HepG2 (cell line): ENCODE measurements at regions of chr16 and their contacts with region 1.

Region 1: DNA sequence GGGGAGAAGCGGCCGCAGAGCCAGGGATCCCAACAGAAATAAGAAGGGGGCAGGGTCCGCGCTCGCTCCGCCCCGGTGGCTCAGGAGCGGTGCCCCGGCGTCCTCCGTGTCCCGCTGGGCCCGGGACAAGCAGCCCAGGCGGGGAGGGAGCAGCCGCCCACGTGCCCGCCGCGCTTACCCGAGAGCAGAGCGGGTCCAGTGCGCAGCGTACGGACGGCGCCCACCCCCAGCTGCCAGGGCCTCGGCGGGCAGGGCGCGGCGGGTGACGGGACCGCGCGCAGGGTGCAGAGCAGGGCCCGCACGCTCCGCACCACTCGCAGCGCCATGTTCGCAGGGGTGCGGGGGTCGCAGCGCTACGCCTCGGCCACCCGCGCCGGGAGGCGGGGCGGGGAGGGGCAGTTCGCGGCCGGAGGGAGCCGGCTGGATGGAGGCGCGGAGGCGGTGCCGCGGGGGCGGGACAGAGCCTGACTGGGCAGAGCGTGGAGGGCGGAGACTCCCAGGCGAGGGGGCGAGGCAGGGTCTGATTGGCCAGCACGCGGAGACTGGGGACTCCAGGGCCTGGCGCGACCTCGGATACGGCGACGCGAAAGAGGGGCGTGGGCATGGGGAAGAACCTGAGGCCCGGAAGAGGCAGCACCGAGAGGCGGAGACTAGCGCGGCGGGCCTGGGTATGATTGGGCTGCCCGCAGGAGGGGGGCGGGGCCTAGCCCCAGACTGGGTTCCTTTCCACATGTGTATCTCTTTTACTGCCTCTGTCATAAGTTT is at the start of gene GCSH:
- DNase-seq: peak; percentile 98
- ATAC-seq: peak; percentile 98
- H3K4me3 ChIP-seq: peak within 1 kb of the TSS; percentile 75 to 86 (median 83)
- H3K27ac ChIP-seq: peak within 1 kb of the TSS; percentile 88
- H3K4me1 ChIP-seq: peaks cover 52% of the 10 kb centered on the region
- H3K27me3 ChIP-seq: no peaks in the 10 kb centered on the region; a peak in 1 of 5 replicates
- CTCF ChIP-seq: no peak; the same call in 1 of the 2 replicates
- EP300 ChIP-seq: no peak
- POLR2A ChIP-seq: peak; percentile 67 to 82; a peak in 3 of 4 replicates
- RAD21 ChIP-seq: peak; percentile 66
- total RNA-seq, gene GCSH: 103 and 117 TPM in 2 replicates

Region 2: DNA sequence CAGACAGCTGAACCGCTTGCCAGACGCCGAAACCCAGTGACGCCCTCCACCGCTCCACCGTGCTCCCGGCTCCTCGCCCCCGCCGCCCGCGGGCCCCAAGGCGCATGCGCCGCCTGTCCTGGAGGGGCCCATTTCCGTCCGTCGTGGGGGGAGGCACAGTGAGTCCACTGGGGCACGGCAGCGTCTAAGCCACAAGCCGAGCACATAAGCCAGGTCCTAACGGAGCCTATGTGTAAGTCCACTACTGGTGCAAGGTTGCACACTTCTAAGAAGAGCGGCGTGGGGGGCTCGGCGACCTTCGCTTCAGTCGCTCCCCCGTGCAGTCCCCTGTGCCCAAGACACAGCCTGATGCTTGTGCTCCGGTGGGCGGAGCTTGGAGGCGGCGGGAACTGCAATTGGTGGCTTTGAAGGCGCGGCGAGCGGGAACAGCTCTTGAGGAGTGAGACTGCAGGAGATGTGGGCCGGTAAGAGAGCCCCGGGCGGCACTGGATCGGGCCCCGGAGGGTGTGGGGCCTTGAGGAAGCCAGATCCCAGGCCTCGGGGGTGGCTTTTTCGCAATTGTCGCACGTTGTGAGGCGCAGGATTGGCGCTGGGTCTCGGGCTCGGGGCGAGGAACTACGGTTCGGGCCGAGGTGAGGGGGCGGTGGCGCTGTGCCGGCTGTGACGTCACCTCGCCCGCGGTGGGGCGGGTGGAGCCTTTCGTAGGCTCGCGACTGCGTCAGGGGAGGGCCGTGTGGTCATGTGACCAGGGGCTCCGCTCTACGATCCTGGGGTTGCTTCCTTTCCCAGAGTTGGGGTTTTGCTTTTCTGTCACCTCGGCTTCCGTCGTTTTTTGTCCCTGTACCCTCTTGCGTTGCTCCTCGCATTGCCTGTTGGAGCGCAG is 89.1 kb before region 1 on chr16 and contains the starts of genes CENPN and CMC2:
- CTCF ChIA-PET with region 1: no interaction called
- POLR2A ChIA-PET with region 1: no interaction called
- in situ Hi-C with region 1: no loop called
- intact Hi-C with region 1: loop called (anchors 5 kb)
- DNase-seq: peak; percentile 98
- ATAC-seq: peak; percentile 91
- H3K4me3 ChIP-seq: peak within 1 kb of the TSS; percentile 90 to 99 (median 90)
- H3K27ac ChIP-seq: peak within 1 kb of the TSS; percentile 99
- H3K4me1 ChIP-seq: peaks cover 35% of the 10 kb centered on the region
- H3K27me3 ChIP-seq: no peaks in the 10 kb centered on the region; a peak in 1 of 5 replicates
- CTCF ChIP-seq: peak; percentile 47; the same call in 1 of the 2 replicates
- EP300 ChIP-seq: peak in 1 of 2 experiments; percentile 4; a peak in 1 of 4 replicates
- POLR2A ChIP-seq: peak; percentile 76 to 80
- RAD21 ChIP-seq: no peak; the same call in 1 of the 2 replicates
- total RNA-seq, gene CENPN: 129 and 193 TPM in 2 replicates
- total RNA-seq, gene CMC2: 129 and 147 TPM in 2 replicates

Region 3: DNA sequence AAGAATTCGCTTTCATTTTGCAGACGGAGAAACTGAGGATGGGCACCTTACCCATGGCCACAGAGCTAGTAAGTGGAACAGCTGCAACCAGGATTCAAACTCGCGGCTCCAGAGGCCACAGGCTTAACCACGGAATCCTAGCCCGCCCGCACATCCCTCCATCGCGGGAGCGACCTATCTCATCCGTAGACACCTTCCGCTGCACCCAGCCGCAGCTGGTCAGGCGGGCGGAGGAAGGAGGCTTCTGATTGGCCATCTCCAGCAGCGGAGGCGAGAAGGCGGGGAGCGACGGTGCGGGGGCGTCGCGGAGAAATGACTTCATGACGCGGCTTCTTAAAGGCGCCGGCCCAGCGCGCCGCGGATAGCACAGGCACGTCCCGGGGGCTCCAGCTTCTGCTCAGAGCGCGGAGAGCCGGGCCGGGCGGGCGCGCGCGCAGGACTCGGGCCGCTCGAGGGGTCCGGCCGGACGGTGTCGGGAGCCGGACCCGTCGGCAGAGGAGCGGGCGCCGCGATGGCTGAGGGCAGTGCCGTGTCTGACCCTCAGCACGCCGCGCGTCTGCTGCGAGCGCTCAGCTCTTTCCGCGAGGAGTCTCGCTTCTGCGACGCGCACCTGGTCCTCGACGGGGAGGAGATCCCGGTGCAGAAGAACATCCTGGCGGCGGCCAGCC is 218.6 kb after region 1 on chr16 and contains the start of gene GAN:
- CTCF ChIA-PET with region 1: no interaction called
- POLR2A ChIA-PET with region 1: no interaction called
- in situ Hi-C with region 1: no loop called
- intact Hi-C with region 1: loop called (anchors 1 kb)
- DNase-seq: peak; percentile 95
- ATAC-seq: peak; percentile 96
- H3K4me3 ChIP-seq: peak within 1 kb of the TSS; percentile 88 to 95 (median 93)
- H3K27ac ChIP-seq: peak within 1 kb of the TSS; percentile 80
- H3K4me1 ChIP-seq: peaks cover 52% of the 10 kb centered on the region
- H3K27me3 ChIP-seq: no peaks in the 10 kb centered on the region; a peak in 1 of 5 replicates
- CTCF ChIP-seq: no peak
- EP300 ChIP-seq: 0 out of 4 replicates have a peak, but pooled peaks of 1 of the 2 experiments have one; percentile 41
- POLR2A ChIP-seq: peak; percentile 83 to 90
- RAD21 ChIP-seq: peak; percentile 66
- total RNA-seq, gene GAN: 11.0 and 16.3 TPM in 2 replicates

Region 4: GRCh38 chr16:82857693-82858365 is 1761.7 kb after region 1 on chr16:
- CTCF ChIA-PET with region 1: no interaction called
- POLR2A ChIA-PET with region 1: no interaction called
- in situ Hi-C with region 1: no loop called
- intact Hi-C with region 1: no loop called
- DNase-seq: no peak
- ATAC-seq: no peak
- H3K4me3 ChIP-seq: no peak overlapping the region
- H3K27ac ChIP-seq: no peak overlapping the region
- H3K4me1 ChIP-seq: no peaks in the 10 kb centered on the region
- H3K27me3 ChIP-seq: no peaks in the 10 kb centered on the region
- CTCF ChIP-seq: no peak
- EP300 ChIP-seq: no peak
- POLR2A ChIP-seq: no peak
- RAD21 ChIP-seq: no peak